Naive thymus-derived CD4-positive, alpha-beta T cell (primary cell): ENCODE measurements at regions of chr9 and their contacts with region 1.

Region 1: DNA sequence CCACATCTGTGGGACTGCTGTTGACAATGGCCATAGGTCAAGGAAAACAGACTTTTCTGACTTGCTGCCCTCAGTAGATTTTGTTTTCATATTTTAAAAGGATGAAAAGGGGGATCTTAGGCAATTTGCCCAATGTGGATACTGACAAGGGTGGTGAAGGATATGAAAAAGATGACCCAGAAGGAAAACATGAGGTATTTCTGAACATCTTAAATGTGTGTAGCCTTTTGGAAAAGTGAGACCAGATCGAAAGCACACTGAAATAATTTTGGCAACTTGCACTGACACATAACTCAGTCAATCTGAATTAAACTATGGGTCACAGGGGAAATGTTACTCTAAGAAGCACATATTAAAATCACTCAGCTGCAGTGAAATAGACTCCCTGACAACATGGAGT is 1793.0 kb upstream of the ACO1 start:
- DNase-seq: no peak
- ATAC-seq: no peak
- H3K4me3 ChIP-seq: no peak overlapping the region
- H3K4me3 Mint-ChIP-seq: no peak overlapping the region
- H3K27ac ChIP-seq: no peak overlapping the region
- H3K27ac Mint-ChIP-seq: no peak overlapping the region
- H3K4me1 ChIP-seq: no peaks in the 10 kb centered on the region
- H3K4me1 Mint-ChIP-seq: no peaks in the 10 kb centered on the region
- H3K27me3 ChIP-seq: no peaks in the 10 kb centered on the region
- H3K27me3 Mint-ChIP-seq: no peaks in the 10 kb centered on the region

Region 2: DNA sequence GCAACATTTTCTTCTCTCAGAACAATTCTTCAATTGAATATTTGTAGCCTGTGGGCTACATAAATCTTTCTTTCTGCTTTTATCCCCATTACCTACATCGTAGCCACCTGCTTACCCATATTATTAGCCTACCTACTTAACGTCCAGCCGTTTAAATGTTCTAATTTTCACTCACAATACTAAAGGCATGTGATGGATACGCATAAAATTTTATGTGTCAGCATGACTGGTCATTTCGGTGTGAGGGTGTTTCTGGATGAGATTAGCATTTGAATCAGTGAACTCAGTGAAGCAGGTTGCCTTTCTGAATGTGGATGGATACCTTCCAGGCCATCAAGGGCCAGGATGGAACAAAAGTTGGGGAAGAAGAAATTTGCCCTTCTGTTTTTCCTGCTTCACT is 70.5 kb after region 1 on chr9:
- CTCF ChIA-PET with region 1: no interaction called
- POLR2A ChIA-PET with region 1: no interaction called
- intact Hi-C with region 1: loop called in 1 of 2 experiments (anchors 10 kb)
- DNase-seq: no peak
- ATAC-seq: no peak
- H3K4me3 ChIP-seq: no peak overlapping the region
- H3K4me3 Mint-ChIP-seq: no peak overlapping the region
- H3K27ac ChIP-seq: no peak overlapping the region
- H3K27ac Mint-ChIP-seq: no peak overlapping the region
- H3K4me1 ChIP-seq: no peaks in the 10 kb centered on the region
- H3K4me1 Mint-ChIP-seq: no peaks in the 10 kb centered on the region
- H3K27me3 ChIP-seq: no peaks in the 10 kb centered on the region
- H3K27me3 Mint-ChIP-seq: no peaks in the 10 kb centered on the region